ENCODE measurements at regions of chr18 and their contacts with region 1.

Region 1: DNA sequence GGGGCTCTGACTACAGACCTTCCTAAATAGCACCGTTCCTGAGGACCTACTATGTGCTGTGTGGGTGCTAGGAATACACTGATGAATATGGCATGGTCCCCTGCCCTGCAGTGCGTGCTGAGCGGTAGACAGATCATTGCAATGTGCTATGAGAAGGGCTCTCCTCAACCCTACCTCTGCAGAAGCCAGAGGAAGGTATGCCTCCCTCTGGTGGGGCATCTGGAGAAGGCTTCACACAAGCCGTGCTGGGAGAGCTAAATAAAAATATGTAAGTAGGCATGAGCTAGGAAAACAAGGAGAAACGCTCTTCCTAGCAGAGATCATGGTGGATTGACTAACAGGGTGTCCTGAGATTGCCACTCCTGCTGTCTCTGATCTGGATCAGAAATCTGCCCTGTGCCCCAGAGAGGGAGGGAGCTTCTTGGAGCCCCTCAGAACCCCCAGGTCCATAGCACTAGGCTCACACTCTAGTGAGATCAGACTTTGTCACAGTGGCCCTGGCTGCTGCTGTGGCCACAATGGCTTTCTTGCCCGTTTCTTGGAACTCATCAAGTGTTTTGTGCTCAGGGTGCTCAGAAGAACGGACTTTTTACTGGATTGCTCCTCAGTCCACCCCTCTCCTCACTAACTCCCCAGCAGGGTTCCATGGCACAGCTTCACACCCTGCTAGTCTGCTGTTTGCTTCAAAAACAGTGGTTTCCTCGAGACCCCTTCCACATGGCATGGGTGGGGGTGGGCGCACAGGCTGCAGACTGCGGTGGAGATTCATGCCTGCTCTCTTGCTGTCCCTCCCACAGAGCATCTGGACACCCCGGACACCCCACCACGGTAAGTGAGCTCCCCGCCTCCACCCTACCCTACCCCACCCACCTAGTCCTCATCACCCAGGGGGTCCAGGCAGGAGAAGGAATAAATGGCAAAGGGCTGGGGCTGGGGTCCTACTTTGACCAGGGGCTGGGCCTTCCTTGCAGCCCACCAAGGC is 14.2 kb downstream of the SIGLEC15 start:
- DNase-seq: peak; percentile 90
- H3K4me3 ChIP-seq: no peak overlapping the region
- H3K27ac ChIP-seq: no peak overlapping the region
- H3K4me1 ChIP-seq: no peaks in the 10 kb centered on the region; the same call in 1 of the 2 replicates
- H3K27me3 ChIP-seq: no peaks in the 10 kb centered on the region

Region 2: DNA sequence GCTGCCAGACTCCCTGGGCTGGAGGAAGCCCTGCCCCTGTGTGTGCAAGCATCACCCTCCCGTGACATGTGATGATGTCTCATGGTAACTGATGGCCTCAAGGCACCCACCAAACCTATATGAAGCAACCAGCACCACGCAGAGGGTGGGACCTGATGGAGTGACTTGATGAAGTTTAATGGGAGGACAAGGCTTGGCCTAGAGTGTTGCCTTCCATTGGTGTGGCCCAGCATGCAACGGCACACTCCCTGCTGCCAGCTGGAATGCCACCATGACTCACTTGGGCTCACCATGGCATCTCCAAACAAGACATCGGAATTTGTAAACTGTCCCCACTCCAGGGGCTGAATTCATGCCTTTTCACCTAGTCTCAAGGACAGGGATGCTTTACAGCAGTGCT is 124.4 kb before region 1 on chr18:
- in situ Hi-C with region 1: loop called (anchors 10 kb)
- DNase-seq: no peak
- H3K4me3 ChIP-seq: no peak overlapping the region
- H3K27ac ChIP-seq: no peak overlapping the region
- H3K4me1 ChIP-seq: no peaks in the 10 kb centered on the region
- H3K27me3 ChIP-seq: no peaks in the 10 kb centered on the region

Region 3: GRCh38 chr18:46374863-46375262 is 535.2 kb after region 1 on chr18:
- in situ Hi-C with region 1: no loop called
- DNase-seq: no peak
- H3K4me3 ChIP-seq: no peak overlapping the region
- H3K27ac ChIP-seq: no peak overlapping the region
- H3K4me1 ChIP-seq: no peaks in the 10 kb centered on the region
- H3K27me3 ChIP-seq: peaks cover 6% of the 10 kb centered on the region; the same call in 1 of the 2 replicates

Measured in GM23248 (cell line).